ENCODE measurements at regions of chr1 and their contacts with region 1.

Region 1: GRCh38 chr1:156740679-156741612 is at the start of gene MRPL24:
- DNase-seq: peak; percentile 99
- H3K4me3 Mint-ChIP-seq: peak within 1 kb of the TSS; percentile 98
- H3K27ac Mint-ChIP-seq: peak within 1 kb of the TSS; percentile 98
- H3K4me1 Mint-ChIP-seq: peaks cover 40% of the 10 kb centered on the region
- H3K27me3 Mint-ChIP-seq: no peaks in the 10 kb centered on the region
- total RNA-seq, gene MRPL24: 91.1 to 114 TPM

Region 2: DNA sequence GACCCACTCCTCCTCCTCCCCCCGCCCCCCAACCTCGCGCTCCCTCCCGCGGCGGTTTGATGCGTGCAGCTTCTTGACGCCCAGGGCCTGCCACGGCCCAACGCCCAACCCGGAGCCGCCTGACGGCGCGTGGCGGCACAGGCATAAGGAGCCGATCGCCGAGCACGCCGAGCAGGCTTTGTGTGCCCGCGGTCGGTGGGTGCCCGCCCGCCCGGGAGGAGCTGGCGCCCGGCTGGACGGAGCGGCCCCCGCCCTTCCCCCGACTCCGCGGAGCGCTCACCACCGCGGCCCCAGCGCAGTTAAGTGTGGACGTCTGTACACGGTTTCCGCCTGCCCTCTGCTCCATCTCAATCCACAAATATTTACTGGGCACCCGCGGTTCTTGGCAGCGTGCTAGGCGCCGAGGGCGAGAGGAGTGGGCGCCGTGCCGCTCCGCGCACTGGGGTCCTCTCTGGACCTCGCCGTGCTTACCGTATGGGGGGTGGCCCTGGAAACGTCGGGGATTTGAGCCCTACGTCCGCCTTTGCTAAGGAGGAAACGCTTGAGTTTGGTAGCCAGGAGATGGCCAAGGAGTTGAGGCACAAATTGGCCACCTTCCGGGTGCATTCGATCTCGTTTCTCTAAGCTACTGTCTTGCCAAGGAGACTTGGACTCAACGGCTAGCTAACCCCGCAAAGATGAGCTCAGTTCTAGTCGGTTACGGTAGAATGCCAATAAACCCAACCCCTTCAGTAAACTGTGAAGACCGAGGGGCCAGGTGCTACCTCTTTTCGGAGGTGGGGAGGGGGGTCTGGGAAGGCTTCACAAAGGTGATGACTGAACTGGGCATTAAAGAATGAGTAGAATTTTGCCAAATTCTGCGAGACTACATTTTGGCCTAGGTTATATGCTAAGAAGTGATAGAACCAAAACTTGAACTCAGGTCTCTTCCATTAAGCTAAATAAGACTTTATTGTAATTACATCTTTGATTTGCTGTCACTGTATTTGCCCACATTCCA is 11.1 kb after region 1 on chr1:
- CTCF ChIA-PET with region 1: interaction called, 5 read pairs
- intact Hi-C with region 1: loop called (anchors 1 kb)
- DNase-seq: peak; percentile 98
- H3K4me3 Mint-ChIP-seq: peak overlapping the region; percentile 86
- H3K27ac Mint-ChIP-seq: peak overlapping the region; percentile 88
- H3K4me1 Mint-ChIP-seq: peaks cover 28% of the 10 kb centered on the region
- H3K27me3 Mint-ChIP-seq: no peaks in the 10 kb centered on the region